ENCODE measurements at regions of chr3 and their contacts with region 1.

Region 1: GRCh38 chr3:182837855-182838454 is 44.7 kb downstream of the ATP11B start:
- DNase-seq: no peak
- H3K4me3 ChIP-seq: no peak overlapping the region
- H3K27me3 ChIP-seq: no peaks in the 10 kb centered on the region
- CTCF ChIP-seq: peak; percentile 47

Region 2: GRCh38 chr3:182465301-182466185 is 372.4 kb before region 1 on chr3:
- CTCF ChIA-PET with region 1: no interaction called
- POLR2A ChIA-PET with region 1: no interaction called
- DNase-seq: no peak
- H3K4me3 ChIP-seq: no peak overlapping the region
- H3K27me3 ChIP-seq: no peaks in the 10 kb centered on the region
- CTCF ChIP-seq: no peak

Region 3: DNA sequence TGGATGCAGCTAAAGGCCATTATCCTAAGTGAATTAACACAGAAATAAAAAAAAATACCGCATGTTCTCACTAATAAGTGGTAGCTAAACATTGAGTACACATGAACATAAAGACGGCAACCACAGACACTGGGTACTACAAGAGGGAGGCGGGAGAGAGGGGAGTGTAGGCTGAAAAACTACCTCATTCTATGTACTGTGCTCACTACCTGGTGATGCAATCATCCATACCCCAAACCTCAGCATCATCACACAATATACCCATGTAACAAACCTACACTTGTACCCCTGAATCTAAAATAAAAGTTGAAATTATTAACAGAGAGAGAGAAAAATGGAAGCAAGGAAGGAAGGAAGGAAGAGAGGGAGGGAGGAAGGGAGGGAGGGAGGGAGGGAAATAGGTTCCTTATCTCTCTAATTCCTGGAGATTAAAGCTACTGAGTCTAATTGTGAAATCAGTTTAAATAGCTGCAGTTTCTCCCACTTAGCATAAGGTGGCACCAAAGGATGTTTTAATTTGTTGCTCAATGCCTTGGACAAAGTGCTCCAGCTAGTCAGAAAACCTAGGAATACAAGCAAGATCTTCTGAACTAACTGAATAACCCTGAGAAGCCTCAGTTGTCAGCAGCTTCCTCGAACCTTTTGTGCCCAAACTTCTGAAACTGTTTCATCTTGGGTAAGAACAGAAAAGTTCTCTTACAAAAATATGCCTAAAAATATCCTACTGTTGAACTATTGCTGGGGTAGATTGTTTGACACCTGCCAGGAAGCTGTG is 124.0 kb before region 1 on chr3:
- CTCF ChIA-PET with region 1: interaction called, 16 read pairs
- POLR2A ChIA-PET with region 1: no interaction called
- DNase-seq: peak; percentile 23
- H3K4me3 ChIP-seq: no peak overlapping the region
- H3K27me3 ChIP-seq: no peaks in the 10 kb centered on the region
- CTCF ChIP-seq: peak; percentile 58

Measured in BJ (cell line).